Astrocyte of the cerebellum (primary cell): ENCODE measurements at regions of chr5 and their contacts with region 1.

Region 1: DNA sequence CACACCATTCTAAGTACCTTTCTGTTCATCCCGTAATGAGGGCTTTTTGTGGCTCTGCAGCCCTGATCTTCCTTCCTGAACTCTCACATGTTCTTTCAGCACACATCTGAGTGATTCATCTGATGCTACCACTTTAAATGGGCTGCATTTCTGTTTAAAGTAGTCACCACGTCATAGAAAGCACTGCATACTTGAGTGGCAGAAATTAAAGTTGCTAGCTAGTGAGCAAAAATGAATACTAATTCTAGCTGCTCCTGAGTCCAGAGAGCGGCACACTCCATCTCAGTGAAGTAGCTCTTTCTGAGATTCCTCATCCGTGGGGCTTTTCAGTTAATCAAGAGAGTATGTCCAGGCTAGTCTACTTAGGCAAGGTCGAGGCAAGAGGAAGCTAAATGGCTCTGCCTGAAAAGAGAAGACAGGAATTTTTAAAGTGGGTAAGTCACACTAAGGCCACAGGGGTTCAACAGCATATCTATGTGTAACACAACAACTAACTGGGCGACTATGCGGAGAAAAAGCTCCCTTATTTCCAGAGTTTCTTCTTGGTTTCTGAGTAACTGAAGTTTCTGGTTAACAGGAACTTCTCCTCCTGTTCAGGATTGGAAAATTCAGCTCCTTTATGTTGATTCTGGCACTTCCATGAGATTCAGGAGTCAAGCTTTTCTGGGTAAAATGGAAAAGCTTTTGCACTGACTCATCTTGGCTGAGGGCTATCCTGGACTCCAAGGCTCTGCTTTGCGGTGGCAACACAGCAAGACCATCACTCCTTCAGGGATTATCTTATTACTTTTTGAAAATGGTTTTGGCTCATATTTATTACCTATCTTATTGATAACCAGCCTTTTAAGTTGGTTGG is 109.5 kb downstream of the TAF11L14 start:
- DNase-seq: peak; percentile 89
- H3K4me3 ChIP-seq: peak overlapping the region; percentile 32
- CTCF ChIP-seq: no peak

Region 2: DNA sequence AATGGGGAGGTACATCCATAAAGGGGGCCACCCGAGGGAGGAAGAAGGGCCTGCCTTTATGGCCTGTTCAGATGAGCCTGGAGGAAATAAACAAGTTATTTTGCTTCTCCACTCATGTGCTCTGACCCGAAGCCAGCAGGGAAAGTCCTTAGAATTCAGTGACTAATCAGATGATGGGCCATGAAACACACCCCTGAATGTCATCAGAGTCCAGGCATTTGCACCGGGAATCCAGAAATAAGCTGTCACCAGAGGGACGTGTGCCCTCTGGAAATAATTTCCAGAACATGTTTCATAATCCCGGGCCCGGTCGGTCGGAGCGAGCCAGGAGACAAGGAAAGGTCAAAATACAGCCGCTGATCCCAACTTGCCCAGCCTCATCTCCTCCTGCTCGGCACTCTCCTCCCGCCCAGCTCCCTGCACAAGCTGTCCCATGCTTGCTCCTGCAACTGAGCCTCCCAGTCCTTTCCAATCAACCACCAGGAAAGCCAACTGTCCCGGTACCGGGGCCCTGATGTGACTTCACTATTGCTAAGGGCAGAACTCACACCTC is 1204.6 kb before region 1 on chr5:
- in situ Hi-C with region 1: loop called (anchors 25 kb)
- DNase-seq: no peak
- H3K4me3 ChIP-seq: no peak overlapping the region
- CTCF ChIP-seq: no peak

Region 3: DNA sequence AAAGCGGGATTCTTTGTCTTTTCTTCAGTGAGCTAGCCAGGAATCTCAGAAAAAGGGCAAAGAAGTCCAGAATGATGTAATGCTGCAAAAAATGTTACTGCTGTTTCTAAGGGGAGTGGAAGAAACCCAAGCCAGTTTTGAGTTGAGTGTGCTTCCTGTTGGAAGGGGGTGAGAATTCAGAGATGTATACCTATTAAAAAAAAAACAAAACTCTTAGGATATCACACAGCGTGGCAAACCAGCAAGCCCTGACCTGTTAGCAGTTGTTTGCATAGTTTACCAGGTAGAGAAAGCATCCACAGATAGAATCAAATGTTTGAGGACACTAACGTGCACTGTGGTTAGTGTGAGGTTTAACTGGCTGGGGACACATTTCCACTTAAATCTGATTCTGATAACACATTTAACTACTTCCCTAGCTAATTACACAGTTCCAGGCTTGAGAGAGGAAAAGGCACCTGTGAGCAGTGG is 515.0 kb before region 1 on chr5:
- in situ Hi-C with region 1: loop called (anchors 5 kb)
- DNase-seq: no peak
- H3K4me3 ChIP-seq: no peak overlapping the region
- CTCF ChIP-seq: no peak

Region 4: DNA sequence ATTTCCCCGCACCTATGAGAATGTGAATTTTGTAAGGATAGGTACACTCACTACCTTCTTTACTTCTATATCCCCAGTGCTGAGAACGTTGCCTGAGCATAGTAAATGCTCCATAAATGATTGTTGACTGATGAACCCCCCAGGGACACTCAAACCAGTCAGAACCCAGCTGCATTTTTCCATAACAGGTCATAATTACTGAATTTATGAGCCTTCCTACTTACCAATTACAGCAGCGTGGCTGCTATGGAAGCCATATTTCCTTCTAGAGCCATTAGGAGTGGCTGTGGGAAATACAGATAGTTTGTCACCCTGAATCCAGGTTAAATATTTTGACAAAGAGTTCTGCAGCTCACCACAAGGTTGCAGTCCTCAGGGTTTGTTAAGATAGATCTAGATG is 25.5 kb after region 1 on chr5:
- in situ Hi-C with region 1: no loop called
- DNase-seq: no peak
- H3K4me3 ChIP-seq: no peak overlapping the region
- CTCF ChIP-seq: no peak